ENCODE measurements at regions of chr17 and their contacts with region 1.

Region 1: GRCh38 chr17:5031365-5032082 is 3.7 kb downstream of the SLC52A1 start:
- DNase-seq: peak; percentile 40 to 65
- ATAC-seq: peak; percentile 58 to 61
- H3K4me3 ChIP-seq: peak overlapping the region; percentile 43 to 53 (median 47)
- H3K27ac ChIP-seq: no peak overlapping the region
- H3K4me1 ChIP-seq: no peaks in the 10 kb centered on the region
- H3K27me3 ChIP-seq: peaks cover 8 to 11% (median 9%) of the 10 kb centered on the region in 3 donors
- CTCF ChIP-seq: peak; percentile 66 to 85 (median 83)
- POLR2A ChIP-seq: no peak

Region 2: DNA sequence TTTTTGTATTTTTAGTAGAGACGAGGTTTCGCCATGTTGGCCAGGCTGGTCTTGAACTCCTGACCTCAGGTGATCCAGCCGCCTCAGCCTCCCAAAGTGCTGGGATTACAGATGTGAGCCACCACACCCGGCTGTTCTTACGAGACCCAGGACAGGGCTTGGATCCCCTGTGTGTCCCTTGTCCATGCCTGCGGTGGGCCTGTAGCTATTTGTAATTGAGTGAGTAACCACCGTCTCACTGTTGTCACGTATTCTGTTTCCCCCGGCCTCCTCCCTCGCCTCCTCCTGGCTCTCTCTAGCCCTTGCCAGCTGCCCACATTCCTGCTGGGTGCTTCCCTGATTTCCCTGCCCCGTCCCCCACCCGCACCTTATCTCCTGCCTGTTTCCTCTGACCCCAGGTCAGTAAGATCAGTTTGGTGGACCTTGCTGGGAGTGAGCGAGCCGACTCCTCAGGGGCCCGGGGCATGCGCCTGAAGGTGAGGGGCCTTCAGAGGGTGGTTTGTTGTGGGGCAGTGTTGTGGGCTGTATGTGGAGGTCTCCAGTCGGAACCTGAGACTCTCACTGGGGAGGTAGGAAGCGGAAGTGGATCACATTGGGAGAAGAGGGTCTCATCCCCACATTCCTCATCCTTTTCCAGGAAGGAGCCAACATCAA is 28.2 kb before region 1 on chr17:
- in situ Hi-C with region 1: no loop called
- intact Hi-C with region 1: loop called (anchors 2 kb)
- DNase-seq: peak; percentile 91 to 97
- ATAC-seq: peak; percentile 67 to 68
- H3K4me3 ChIP-seq: peak overlapping the region in 1 of 4 donors; percentile 16
- H3K27ac ChIP-seq: peak overlapping the region; percentile 98 to 99 (median 99)
- H3K4me1 ChIP-seq: peaks cover 36 to 44% of the 10 kb centered on the region in 2 donors
- H3K27me3 ChIP-seq: no peaks in the 10 kb centered on the region
- CTCF ChIP-seq: no peak
- POLR2A ChIP-seq: no peak

Region 3: GRCh38 chr17:5049314-5049895 is 17.9 kb after region 1 on chr17:
- in situ Hi-C with region 1: no loop called
- intact Hi-C with region 1: loop called (anchors 2 kb)
- DNase-seq: no peak
- ATAC-seq: no peak
- H3K4me3 ChIP-seq: no peak overlapping the region
- H3K27ac ChIP-seq: peak overlapping the region; percentile 6 to 63 (median 38)
- H3K4me1 ChIP-seq: peaks cover 0 to 8% of the 10 kb centered on the region in 2 donors
- H3K27me3 ChIP-seq: no peaks in the 10 kb centered on the region
- CTCF ChIP-seq: no peak
- POLR2A ChIP-seq: no peak

Measured in gastrocnemius medialis (tissue), 4 donors.